ENCODE measurements at regions of chr14 and their contacts with region 1.

Region 1: GRCh38 chr14:93939304-93940229 is 12.4 kb downstream of the FAM181A start:
- DNase-seq: peak; percentile 73 to 91 (median 90)
- ATAC-seq: peak; percentile 60 to 84
- H3K4me3 ChIP-seq: no peak overlapping the region
- H3K27ac ChIP-seq: no peak overlapping the region
- H3K4me1 ChIP-seq: no peaks in the 10 kb centered on the region
- H3K27me3 ChIP-seq: no peaks in the 10 kb centered on the region

Region 2: DNA sequence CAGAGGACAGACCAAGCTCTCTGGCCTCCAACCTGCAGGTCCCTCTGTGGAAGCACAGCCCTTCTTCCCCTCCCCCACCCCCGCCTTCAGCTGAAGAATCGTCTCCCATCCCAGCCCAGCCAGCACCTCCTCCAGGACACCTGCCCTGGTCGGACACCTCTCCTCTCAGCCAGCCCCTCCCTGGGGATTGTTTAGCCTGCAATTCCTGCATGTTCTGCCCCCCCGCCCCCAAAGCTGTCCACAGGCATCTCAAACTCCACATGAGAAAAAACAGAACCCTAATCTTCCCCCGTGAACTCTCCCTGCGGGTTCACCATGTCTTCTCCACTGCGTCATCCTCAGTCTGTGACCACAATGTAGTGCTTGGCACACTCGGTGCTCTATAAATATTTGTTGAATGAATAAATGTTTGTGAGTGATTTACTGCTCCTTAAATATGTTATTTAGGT is 175.3 kb before region 1 on chr14:
- intact Hi-C with region 1: no loop called
- DNase-seq: no peak
- ATAC-seq: peak; percentile 6 to 39
- H3K4me3 ChIP-seq: no peak overlapping the region
- H3K27ac ChIP-seq: no peak overlapping the region
- H3K4me1 ChIP-seq: peaks cover 9% of the 10 kb centered on the region
- H3K27me3 ChIP-seq: no peaks in the 10 kb centered on the region

Region 3: GRCh38 chr14:94001501-94002396 is 62.2 kb after region 1 on chr14:
- intact Hi-C with region 1: loop called (anchors 1 to 5 kb)
- DNase-seq: peak; percentile 42 to 74 (median 71)
- ATAC-seq: peak; percentile 77 to 79
- H3K4me3 ChIP-seq: no peak overlapping the region
- H3K27ac ChIP-seq: no peak overlapping the region
- H3K4me1 ChIP-seq: no peaks in the 10 kb centered on the region
- H3K27me3 ChIP-seq: no peaks in the 10 kb centered on the region